Endothelial cell of umbilical vein (primary cell): ENCODE measurements at regions of chr20 and their contacts with region 1.

Region 1: GRCh38 chr20:39112178-39112743 is 150.1 kb downstream of the DHX35 start:
- DNase-seq: peak; percentile 41
- H3K4me3 ChIP-seq: no peak overlapping the region
- H3K27ac ChIP-seq: no peak overlapping the region
- H3K4me1 ChIP-seq: peaks cover 22% of the 10 kb centered on the region
- H3K27me3 ChIP-seq: peaks cover 2 to 20% of the 10 kb centered on the region in 2 experiments
- CTCF ChIP-seq: peak; percentile 49 to 62
- POLR2A ChIP-seq: no peak

Region 2: GRCh38 chr20:38628580-38629470 is 483.4 kb before region 1 on chr20:
- CTCF ChIA-PET with region 1: no interaction called
- POLR2A ChIA-PET with region 1: no interaction called
- dilution Hi-C with region 1: no loop called
- intact Hi-C with region 1: no loop called
- DNase-seq: no peak
- H3K4me3 ChIP-seq: no peak overlapping the region
- H3K27ac ChIP-seq: no peak overlapping the region
- H3K4me1 ChIP-seq: no peaks in the 10 kb centered on the region
- H3K27me3 ChIP-seq: no peaks in the 10 kb centered on the region
- CTCF ChIP-seq: no peak
- POLR2A ChIP-seq: no peak

Region 3: DNA sequence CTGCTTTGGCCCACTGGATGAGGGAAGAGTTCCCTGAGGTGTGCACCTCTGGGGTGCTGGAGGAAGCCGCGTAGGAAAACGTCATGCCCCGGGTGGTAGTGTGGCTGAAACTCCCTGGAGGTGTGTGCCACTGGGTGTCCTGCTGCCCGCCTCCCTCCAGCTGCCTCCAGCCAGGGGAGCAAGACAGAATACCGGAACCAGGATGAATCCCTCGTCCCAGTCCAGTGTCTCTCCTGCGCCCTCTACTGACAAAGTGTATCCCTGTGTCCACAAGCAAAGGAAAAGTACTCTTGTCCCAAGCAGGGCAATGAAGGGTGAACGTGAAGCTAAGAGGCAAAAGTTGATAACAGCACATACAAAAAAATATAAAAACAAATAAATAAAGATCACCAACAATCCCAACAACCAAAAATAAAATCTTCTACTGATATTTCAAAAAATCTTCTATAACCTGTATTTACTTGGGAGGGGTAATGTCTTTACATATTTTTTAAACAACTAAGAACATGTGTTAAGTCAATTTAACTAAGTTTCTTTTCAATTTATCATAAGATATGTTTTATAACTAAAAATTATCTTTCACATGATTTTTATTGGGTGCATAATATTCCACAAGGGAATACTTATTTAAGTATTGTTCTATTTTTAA is 1139.1 kb after region 1 on chr20:
- CTCF ChIA-PET with region 1: no interaction called
- POLR2A ChIA-PET with region 1: no interaction called
- dilution Hi-C with region 1: no loop called
- intact Hi-C with region 1: loop called (anchors 5 kb)
- DNase-seq: peak; percentile 17
- H3K4me3 ChIP-seq: no peak overlapping the region
- H3K27ac ChIP-seq: no peak overlapping the region
- H3K4me1 ChIP-seq: no peaks in the 10 kb centered on the region
- H3K27me3 ChIP-seq: no peaks in the 10 kb centered on the region
- CTCF ChIP-seq: peak in 1 of 2 donors; percentile 27
- POLR2A ChIP-seq: no peak